Activated T-helper 1 cell treated with anti-CD3 and anti-CD28 coated beads, Interleukin-12 subunit alpha, Interleukin-12 subunit beta, Interleukin-2, Interleukin-4 antibody, amounts not matched to agents 30 ng/mL and 10 ng/mL and 1 ng/mL, durations not matched to agents 14 hours and 24 hours and 36 hours (primary cell): ENCODE measurements at regions of chr19 and their contacts with region 1.

Region 1: GRCh38 chr19:17170538-17171297 is 44.4 kb upstream of the USE1 start:
- DNase-seq: peak; percentile 21
- H3K4me3 Mint-ChIP-seq: no peak overlapping the region
- H3K27ac Mint-ChIP-seq: peak overlapping the region; percentile 91
- H3K4me1 Mint-ChIP-seq: peaks cover 20% of the 10 kb centered on the region
- H3K27me3 Mint-ChIP-seq: no peaks in the 10 kb centered on the region

Region 2: GRCh38 chr19:17183858-17184321 is 13.2 kb after region 1 on chr19:
- intact Hi-C with region 1: loop called (anchors 2 kb)
- DNase-seq: peak; percentile 19
- H3K4me3 Mint-ChIP-seq: peak overlapping the region; percentile 82
- H3K27ac Mint-ChIP-seq: peak overlapping the region; percentile 93
- H3K4me1 Mint-ChIP-seq: peaks cover 20% of the 10 kb centered on the region
- H3K27me3 Mint-ChIP-seq: no peaks in the 10 kb centered on the region